ENCODE measurements at regions of chr1 and their contacts with region 1.

Region 1: GRCh38 chr1:159089184-159089791 is 12.7 kb upstream of the AIM2 start:
- DNase-seq: peak; percentile 35
- H3K4me3 Mint-ChIP-seq: no peak overlapping the region
- H3K27ac Mint-ChIP-seq: no peak overlapping the region
- H3K4me1 Mint-ChIP-seq: peaks cover 35% of the 10 kb centered on the region
- H3K27me3 Mint-ChIP-seq: no peaks in the 10 kb centered on the region

Region 2: GRCh38 chr1:159077120-159077961 is 11.9 kb before region 1 on chr1:
- CTCF ChIA-PET with region 1: interaction called, 36 read pairs
- DNase-seq: peak; percentile 92
- H3K4me3 Mint-ChIP-seq: peak overlapping the region; percentile 45
- H3K27ac Mint-ChIP-seq: peak overlapping the region; percentile 99
- H3K4me1 Mint-ChIP-seq: peaks cover 31% of the 10 kb centered on the region
- H3K27me3 Mint-ChIP-seq: peaks cover under 1% of the 10 kb centered on the region

Region 3: GRCh38 chr1:159204161-159205141 is 115.2 kb after region 1 on chr1 and contains the start of gene ACKR1:
- CTCF ChIA-PET with region 1: no interaction called
- DNase-seq: no peak
- H3K4me3 Mint-ChIP-seq: no peak within 1 kb of the TSS
- H3K27ac Mint-ChIP-seq: no peak within 1 kb of the TSS
- H3K4me1 Mint-ChIP-seq: no peaks in the 10 kb centered on the region
- H3K27me3 Mint-ChIP-seq: peaks cover 84% of the 10 kb centered on the region